HEK293 (cell line): ENCODE measurements at regions of chr11 and their contacts with region 1.

Region 1: DNA sequence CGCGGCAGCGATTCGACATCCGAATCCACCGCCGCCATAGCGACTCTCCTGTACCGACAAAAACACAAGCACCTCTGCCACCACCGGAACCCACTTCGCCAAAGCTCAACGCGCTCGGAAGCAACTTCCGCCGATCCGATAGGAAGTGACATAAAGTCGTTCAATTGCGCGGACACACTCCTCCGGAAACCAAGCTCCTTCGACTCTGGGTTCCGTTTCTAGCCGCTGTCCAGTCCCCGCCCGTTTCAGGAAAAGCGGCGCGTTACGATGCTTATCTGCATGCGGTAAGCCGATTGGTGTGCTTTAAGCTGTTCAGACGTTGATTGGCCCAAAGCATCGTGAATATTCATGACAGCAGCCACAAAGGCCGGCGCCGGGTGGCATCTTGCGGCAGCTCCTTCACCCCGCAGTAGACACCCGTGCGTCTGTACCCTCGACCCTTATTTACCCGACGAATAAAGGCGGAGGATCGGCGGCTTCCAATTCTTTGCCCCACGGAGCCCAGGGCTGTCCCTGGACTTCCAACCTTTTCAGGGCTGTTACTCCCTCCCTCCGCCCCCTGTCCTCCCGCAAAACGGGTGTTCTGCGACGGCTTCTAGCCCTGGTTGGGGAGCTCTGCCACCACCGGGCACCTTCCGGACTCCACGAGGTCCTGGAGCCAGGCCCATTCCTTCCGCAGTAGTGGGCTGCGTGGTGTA is at the start of gene TUT1:
- H3K4me3 ChIP-seq: peak within 1 kb of the TSS; percentile 50
- H3K27ac ChIP-seq: peak within 1 kb of the TSS; percentile 73
- H3K4me1 ChIP-seq: no peaks in the 10 kb centered on the region
- CTCF ChIP-seq: no peak

Region 2: GRCh38 chr11:62387381-62387780 is 204.2 kb before region 1 on chr11:
- CTCF ChIA-PET with region 1: no interaction called
- POLR2A ChIA-PET with region 1: no interaction called
- H3K4me3 ChIP-seq: no peak overlapping the region
- H3K27ac ChIP-seq: no peak overlapping the region
- H3K4me1 ChIP-seq: no peaks in the 10 kb centered on the region; the same call in 1 of the 2 replicates
- CTCF ChIP-seq: no peak

Region 3: GRCh38 chr11:62427630-62428233 is 163.9 kb before region 1 on chr11:
- CTCF ChIA-PET with region 1: interaction called, 15 read pairs
- POLR2A ChIA-PET with region 1: interaction called, 18 read pairs
- H3K4me3 ChIP-seq: no peak overlapping the region
- H3K27ac ChIP-seq: no peak overlapping the region
- H3K4me1 ChIP-seq: no peaks in the 10 kb centered on the region; the same call in 1 of the 2 replicates
- CTCF ChIP-seq: no peak

Region 4: GRCh38 chr11:62532096-62532495 is 59.5 kb before region 1 on chr11:
- CTCF ChIA-PET with region 1: no interaction called
- POLR2A ChIA-PET with region 1: no interaction called
- H3K4me3 ChIP-seq: no peak overlapping the region
- H3K27ac ChIP-seq: no peak overlapping the region
- H3K4me1 ChIP-seq: no peaks in the 10 kb centered on the region
- CTCF ChIP-seq: no peak

Region 5: GRCh38 chr11:62612366-62613290 is 21.0 kb after region 1 on chr11 and contains the starts of genes EML3 and ROM1:
- CTCF ChIA-PET with region 1: interaction called, 19 read pairs
- POLR2A ChIA-PET with region 1: interaction called, 28 read pairs
- H3K4me3 ChIP-seq: peak within 1 kb of the TSS; percentile 55
- H3K27ac ChIP-seq: peak within 1 kb of the TSS; percentile 64
- H3K4me1 ChIP-seq: no peaks in the 10 kb centered on the region
- CTCF ChIP-seq: no peak

Region 6: DNA sequence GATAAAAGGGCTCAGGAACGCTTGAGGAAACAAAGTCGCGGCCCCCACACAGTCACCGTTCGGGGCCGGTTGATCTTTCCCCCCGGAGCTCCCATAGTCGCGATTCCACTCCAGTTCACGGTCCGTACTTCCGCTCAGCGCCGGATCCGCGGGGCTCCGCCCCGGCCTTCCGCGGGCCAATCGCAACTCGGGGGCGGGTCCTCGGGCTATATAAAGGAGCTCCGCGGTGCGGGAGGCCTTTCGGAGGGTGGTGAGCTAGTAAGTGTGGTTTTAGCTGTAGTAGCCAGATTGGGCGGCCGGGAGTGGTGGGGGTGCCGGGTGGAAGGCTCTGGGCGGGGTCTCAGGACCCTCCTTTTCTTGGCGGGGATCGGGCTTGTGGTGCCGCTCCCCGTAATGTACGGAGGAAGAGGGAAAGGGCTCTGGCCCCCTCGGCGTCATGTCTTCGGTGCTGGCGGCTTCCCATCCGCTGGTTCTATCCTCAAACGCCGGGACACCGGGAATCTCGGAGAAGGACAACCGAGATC is 73.5 kb after region 1 on chr11 and contains the starts of genes C11orf98 and CSKMT:
- CTCF ChIA-PET with region 1: interaction called, 3 read pairs
- POLR2A ChIA-PET with region 1: interaction called, 56 read pairs
- H3K4me3 ChIP-seq: peak within 1 kb of the TSS; percentile 89
- H3K27ac ChIP-seq: peak within 1 kb of the TSS; percentile 66
- H3K4me1 ChIP-seq: no peaks in the 10 kb centered on the region
- CTCF ChIP-seq: no peak

Region 7: GRCh38 chr11:62753736-62754603 is 162.4 kb after region 1 on chr11 and contains the start of gene ZBTB3:
- CTCF ChIA-PET with region 1: no interaction called
- POLR2A ChIA-PET with region 1: interaction called, 13 read pairs
- H3K4me3 ChIP-seq: peak within 1 kb of the TSS; percentile 73
- H3K27ac ChIP-seq: peak within 1 kb of the TSS; percentile 32; the same call in 1 of the 2 replicates
- H3K4me1 ChIP-seq: no peaks in the 10 kb centered on the region
- CTCF ChIP-seq: no peak

Region 8: GRCh38 chr11:62855571-62856332 is 264.2 kb after region 1 on chr11:
- CTCF ChIA-PET with region 1: no interaction called
- POLR2A ChIA-PET with region 1: interaction called, 13 read pairs
- H3K4me3 ChIP-seq: peak overlapping the region; percentile 88
- H3K27ac ChIP-seq: peak overlapping the region; percentile 82
- H3K4me1 ChIP-seq: no peaks in the 10 kb centered on the region
- CTCF ChIP-seq: no peak